ENCODE measurements at regions of chr10 and their contacts with region 1.

Region 1: DNA sequence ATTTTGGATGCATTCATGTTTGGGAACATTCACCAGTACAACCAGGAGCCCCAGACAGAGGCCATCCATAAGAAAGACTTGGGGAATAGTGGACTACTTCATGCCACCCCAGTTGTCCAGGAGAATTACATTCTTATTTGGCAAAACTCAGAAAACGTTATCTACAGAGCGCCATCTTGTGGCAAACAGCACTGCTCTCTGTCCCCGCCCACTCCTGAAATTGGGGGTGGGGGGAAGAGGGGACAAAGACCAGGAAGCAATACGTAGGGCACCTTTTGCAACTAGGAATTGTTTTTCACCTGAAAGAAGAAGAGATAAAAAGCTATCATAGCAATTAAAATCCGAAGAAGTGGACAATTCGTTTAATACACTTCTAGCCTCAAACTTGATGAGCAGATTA is 134.6 kb upstream of the MGMT start:
- DNase-seq: no peak
- H3K4me3 ChIP-seq: no peak overlapping the region
- H3K27ac ChIP-seq: no peak overlapping the region
- H3K4me1 ChIP-seq: no peaks in the 10 kb centered on the region
- H3K27me3 ChIP-seq: no peaks in the 10 kb centered on the region
- CTCF ChIP-seq: peak in 1 of 5 experiments; percentile 15
- EP300 ChIP-seq: no peak
- POLR2A ChIP-seq: no peak

Region 2: GRCh38 chr10:128950159-128950915 is 382.1 kb before region 1 on chr10:
- in situ Hi-C with region 1: no loop called
- intact Hi-C with region 1: no loop called
- DNase-seq: no peak
- H3K4me3 ChIP-seq: no peak overlapping the region
- H3K27ac ChIP-seq: no peak overlapping the region
- H3K4me1 ChIP-seq: no peaks in the 10 kb centered on the region
- H3K27me3 ChIP-seq: no peaks in the 10 kb centered on the region
- CTCF ChIP-seq: no peak
- EP300 ChIP-seq: no peak
- POLR2A ChIP-seq: no peak

Region 3: DNA sequence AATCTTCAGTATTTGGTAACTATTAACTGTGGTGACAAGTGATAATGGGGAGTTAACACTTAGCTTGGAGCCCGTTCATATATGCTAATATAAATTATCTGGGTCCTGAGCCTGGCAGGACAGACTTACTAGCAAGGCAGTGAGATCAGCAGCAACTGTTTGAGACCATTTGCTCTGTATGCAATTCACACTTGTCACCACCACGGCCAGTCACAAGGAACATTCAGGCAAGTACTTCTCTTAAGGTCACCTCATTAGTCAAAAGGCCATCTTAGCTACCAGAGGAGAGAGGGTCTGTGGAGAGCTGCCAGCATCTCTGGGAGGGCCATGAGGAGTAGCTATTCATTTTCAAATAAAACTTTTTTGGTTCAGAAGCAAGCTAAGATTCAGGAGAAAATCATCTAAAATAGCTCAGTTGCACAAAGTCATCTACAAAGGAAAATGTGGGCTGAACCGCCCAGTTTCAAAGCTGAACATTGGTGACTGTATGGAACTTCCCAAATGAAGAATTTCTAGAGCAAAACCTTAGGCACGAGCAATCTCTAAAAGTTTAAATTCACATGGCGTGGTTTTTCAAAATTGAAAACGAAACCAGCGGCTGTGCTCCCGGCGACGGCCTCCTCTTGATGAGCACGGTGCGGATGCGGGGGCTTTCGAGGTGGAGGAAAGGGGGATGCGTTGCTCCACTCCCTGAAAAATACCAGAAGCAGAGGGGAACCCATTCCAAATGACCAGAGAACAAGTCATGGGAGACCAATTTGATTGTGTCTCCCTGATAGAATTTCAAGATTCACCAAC is 98.9 kb before region 1 on chr10:
- in situ Hi-C with region 1: loop called in 1 of 4 experiments (anchors 25 kb)
- intact Hi-C with region 1: no loop called
- DNase-seq: no peak
- H3K4me3 ChIP-seq: no peak overlapping the region
- H3K27ac ChIP-seq: no peak overlapping the region
- H3K4me1 ChIP-seq: no peaks in the 10 kb centered on the region
- H3K27me3 ChIP-seq: no peaks in the 10 kb centered on the region
- CTCF ChIP-seq: no peak
- EP300 ChIP-seq: no peak
- POLR2A ChIP-seq: no peak

Region 4: GRCh38 chr10:130470286-130470685 is 1137.8 kb after region 1 on chr10:
- in situ Hi-C with region 1: no loop called
- intact Hi-C with region 1: no loop called
- DNase-seq: no peak
- H3K4me3 ChIP-seq: no peak overlapping the region
- H3K27ac ChIP-seq: no peak overlapping the region
- H3K4me1 ChIP-seq: no peaks in the 10 kb centered on the region
- H3K27me3 ChIP-seq: no peaks in the 10 kb centered on the region
- CTCF ChIP-seq: no peak
- EP300 ChIP-seq: no peak
- POLR2A ChIP-seq: no peak